HepG2 (cell line): ENCODE measurements at regions of chr12 and their contacts with region 1.

Region 1: DNA sequence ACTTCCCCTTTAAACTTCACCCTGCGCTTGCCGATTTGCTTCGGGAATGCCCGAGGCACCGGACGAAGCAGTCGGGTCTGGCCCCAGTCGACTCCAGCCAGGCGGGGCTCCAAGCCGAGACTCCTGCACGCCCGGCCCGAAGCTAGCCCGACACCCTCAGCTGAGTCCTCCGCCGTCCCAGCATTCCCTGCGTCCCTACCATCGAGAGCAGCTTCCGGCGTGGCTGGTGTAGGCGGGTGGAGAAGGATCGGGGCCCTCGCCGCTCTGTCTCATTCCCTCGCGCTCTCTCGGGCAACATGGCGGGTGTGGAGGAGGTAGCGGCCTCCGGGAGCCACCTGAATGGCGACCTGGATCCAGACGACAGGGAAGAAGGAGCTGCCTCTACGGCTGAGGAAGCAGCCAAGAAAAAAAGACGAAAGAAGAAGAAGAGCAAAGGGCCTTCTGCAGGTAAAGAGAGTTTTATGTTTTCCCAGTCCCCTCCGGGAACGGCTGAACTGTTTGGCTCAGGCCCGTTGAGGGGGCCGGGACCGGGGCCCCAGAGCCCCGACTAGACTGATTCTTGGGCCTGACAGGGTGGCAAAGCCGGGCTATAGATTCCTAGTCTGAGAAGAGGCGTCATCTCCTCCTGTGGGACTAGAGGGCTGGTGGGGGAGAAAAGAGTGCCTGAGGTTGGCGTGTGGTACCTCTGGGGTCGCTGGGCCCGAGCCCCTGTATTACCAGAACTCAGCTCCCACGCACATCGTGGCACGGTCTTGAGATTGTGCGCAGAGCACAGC is at the start of gene METAP2:
- DNase-seq: peak; percentile 92
- ATAC-seq: peak; percentile 99
- H3K4me3 ChIP-seq: peak within 1 kb of the TSS; percentile 95 to 98 (median 95)
- H3K27ac ChIP-seq: peak within 1 kb of the TSS; percentile 86
- H3K4me1 ChIP-seq: peaks cover 38% of the 10 kb centered on the region
- H3K27me3 ChIP-seq: no peaks in the 10 kb centered on the region; a peak in 1 of 5 replicates
- CTCF ChIP-seq: peak; percentile 24; the same call in 1 of the 2 replicates
- EP300 ChIP-seq: no peak; a peak in 1 of 4 replicates
- POLR2A ChIP-seq: peak; percentile 94 to 95
- RAD21 ChIP-seq: 0 out of 2 replicates have a peak, but pooled peaks have one; percentile 38
- total RNA-seq, gene METAP2: 131 and 204 TPM in 2 replicates

Region 2: GRCh38 chr12:95072900-95073697 is 401.0 kb before region 1 on chr12 and contains the start of gene NR2C1:
- CTCF ChIA-PET with region 1: no interaction called
- POLR2A ChIA-PET with region 1: interaction called, 19 read pairs
- in situ Hi-C with region 1: no loop called
- intact Hi-C with region 1: no loop called
- DNase-seq: peak; percentile 93
- ATAC-seq: peak; percentile 93
- H3K4me3 ChIP-seq: peak within 1 kb of the TSS; percentile 91 to 96 (median 95)
- H3K27ac ChIP-seq: peak within 1 kb of the TSS; percentile 90
- H3K4me1 ChIP-seq: peaks cover 42% of the 10 kb centered on the region
- H3K27me3 ChIP-seq: no peaks in the 10 kb centered on the region; a peak in 1 of 5 replicates
- CTCF ChIP-seq: peak; percentile 92
- EP300 ChIP-seq: 0 out of 4 replicates have a peak, but pooled peaks of 1 of the 2 experiments have one; percentile 8
- POLR2A ChIP-seq: peak; percentile 65 to 66
- RAD21 ChIP-seq: 0 out of 2 replicates have a peak, but pooled peaks have one; percentile 13
- total RNA-seq, gene NR2C1: 22.4 and 38.0 TPM in 2 replicates

Region 3: GRCh38 chr12:95435355-95435754 is 38.7 kb before region 1 on chr12:
- CTCF ChIA-PET with region 1: no interaction called
- POLR2A ChIA-PET with region 1: no interaction called
- in situ Hi-C with region 1: no loop called
- intact Hi-C with region 1: no loop called
- DNase-seq: no peak
- ATAC-seq: no peak
- H3K4me3 ChIP-seq: no peak overlapping the region
- H3K27ac ChIP-seq: no peak overlapping the region
- H3K4me1 ChIP-seq: no peaks in the 10 kb centered on the region
- H3K27me3 ChIP-seq: no peaks in the 10 kb centered on the region; a peak in 1 of 5 replicates
- CTCF ChIP-seq: no peak
- EP300 ChIP-seq: no peak
- POLR2A ChIP-seq: no peak
- RAD21 ChIP-seq: no peak

Region 4: GRCh38 chr12:95446506-95446900 is 27.6 kb before region 1 on chr12:
- CTCF ChIA-PET with region 1: no interaction called
- POLR2A ChIA-PET with region 1: interaction called, 29 read pairs
- in situ Hi-C with region 1: no loop called
- intact Hi-C with region 1: no loop called
- DNase-seq: peak; percentile 25
- ATAC-seq: peak; percentile 98
- H3K4me3 ChIP-seq: peak overlapping the region; percentile 55 to 77 (median 61)
- H3K27ac ChIP-seq: no peak overlapping the region
- H3K4me1 ChIP-seq: peaks cover 26% of the 10 kb centered on the region
- H3K27me3 ChIP-seq: peaks cover 0 to 18% of the 10 kb centered on the region in 2 experiments; a peak in 4 of 5 replicates
- CTCF ChIP-seq: no peak
- EP300 ChIP-seq: no peak
- POLR2A ChIP-seq: no peak
- RAD21 ChIP-seq: no peak

Region 5: DNA sequence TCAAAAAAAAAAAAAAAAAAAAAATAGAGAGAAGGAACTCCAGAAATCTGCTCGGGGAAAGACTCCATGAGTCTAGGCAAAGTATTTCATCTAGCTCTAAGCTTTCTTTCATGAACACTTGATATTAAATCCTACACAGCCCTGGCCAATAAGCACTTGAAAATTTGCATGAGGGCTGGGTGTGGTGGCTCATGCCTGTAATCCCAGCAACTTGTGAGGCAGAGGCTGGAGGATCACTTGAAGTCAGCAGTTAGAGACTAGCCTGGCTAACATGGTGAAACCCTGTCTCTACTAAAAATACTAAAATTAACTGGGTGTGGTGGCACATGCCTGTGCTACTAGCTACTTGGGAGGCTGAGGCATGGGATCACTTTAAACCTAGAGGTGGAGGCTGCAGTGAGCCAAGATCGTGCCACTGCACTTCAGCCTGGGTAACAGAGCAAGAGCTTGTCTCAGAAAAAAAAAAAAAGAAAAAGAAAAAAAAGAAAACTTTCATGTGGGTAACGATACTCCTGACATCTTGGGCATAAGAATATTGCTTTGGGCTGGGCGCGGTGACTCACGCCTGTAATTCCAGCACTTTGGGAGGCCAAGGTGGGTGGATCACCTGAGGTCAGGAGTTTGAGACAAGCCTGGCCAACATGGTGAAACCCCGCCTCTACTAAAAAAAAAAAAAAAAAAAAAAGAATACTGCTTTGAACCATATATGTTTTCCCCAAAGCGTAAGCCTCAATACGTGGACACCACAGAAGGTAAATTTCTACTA is 13.0 kb before region 1 on chr12:
- CTCF ChIA-PET with region 1: no interaction called
- POLR2A ChIA-PET with region 1: interaction called, 11 read pairs
- in situ Hi-C with region 1: no loop called
- intact Hi-C with region 1: no loop called
- DNase-seq: no peak
- ATAC-seq: no peak
- H3K4me3 ChIP-seq: no peak overlapping the region
- H3K27ac ChIP-seq: no peak overlapping the region
- H3K4me1 ChIP-seq: peaks cover 12% of the 10 kb centered on the region
- H3K27me3 ChIP-seq: no peaks in the 10 kb centered on the region; a peak in 1 of 5 replicates
- CTCF ChIP-seq: no peak
- EP300 ChIP-seq: no peak
- POLR2A ChIP-seq: no peak
- RAD21 ChIP-seq: no peak

Region 6: GRCh38 chr12:95959107-95959506 is 485.0 kb after region 1 on chr12:
- CTCF ChIA-PET with region 1: no interaction called
- POLR2A ChIA-PET with region 1: no interaction called
- in situ Hi-C with region 1: no loop called
- intact Hi-C with region 1: no loop called
- DNase-seq: peak; percentile 59
- ATAC-seq: peak; percentile 89
- H3K4me3 ChIP-seq: no peak overlapping the region
- H3K27ac ChIP-seq: no peak overlapping the region
- H3K4me1 ChIP-seq: peaks cover 45% of the 10 kb centered on the region
- H3K27me3 ChIP-seq: no peaks in the 10 kb centered on the region
- CTCF ChIP-seq: peak; percentile 54
- EP300 ChIP-seq: no peak
- POLR2A ChIP-seq: no peak
- RAD21 ChIP-seq: peak; percentile 75; the same call in 1 of the 2 replicates